ENCODE measurements at regions of chr13 and their contacts with region 1.

Region 1: GRCh38 chr13:112638157-112638750 is 50.3 kb upstream of the TUBGCP3 start:
- DNase-seq: no peak
- H3K4me3 ChIP-seq: no peak overlapping the region
- H3K27ac ChIP-seq: no peak overlapping the region
- H3K4me1 ChIP-seq: no peaks in the 10 kb centered on the region
- H3K27me3 ChIP-seq: no peaks in the 10 kb centered on the region
- CTCF ChIP-seq: no peak
- EP300 ChIP-seq: no peak
- POLR2A ChIP-seq: no peak

Region 2: DNA sequence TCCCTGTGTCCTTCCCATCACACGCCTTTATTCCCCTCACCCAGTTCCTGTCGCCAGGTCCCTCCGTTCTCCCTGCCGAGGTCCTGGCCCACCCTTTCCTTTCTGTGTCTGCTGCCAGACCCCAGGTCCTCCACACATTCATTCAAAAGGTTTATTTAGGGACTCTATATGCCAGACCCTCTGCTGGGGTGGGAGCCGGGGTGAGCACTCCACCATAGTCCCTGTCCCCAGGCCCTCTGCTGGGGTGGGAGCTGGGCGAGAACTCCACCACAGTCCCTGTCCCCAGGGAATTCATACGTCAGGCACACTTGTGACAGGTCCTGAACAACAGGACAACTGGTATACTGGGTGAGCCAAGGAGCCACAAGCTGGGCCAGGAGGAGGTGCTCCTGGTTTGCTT is 15.9 kb before region 1 on chr13:
- intact Hi-C with region 1: loop called in 1 of 4 experiments (anchors 1 kb)
- DNase-seq: no peak
- H3K4me3 ChIP-seq: no peak overlapping the region
- H3K27ac ChIP-seq: no peak overlapping the region
- H3K4me1 ChIP-seq: no peaks in the 10 kb centered on the region
- H3K27me3 ChIP-seq: no peaks in the 10 kb centered on the region
- CTCF ChIP-seq: no peak
- EP300 ChIP-seq: no peak
- POLR2A ChIP-seq: no peak

Region 3: DNA sequence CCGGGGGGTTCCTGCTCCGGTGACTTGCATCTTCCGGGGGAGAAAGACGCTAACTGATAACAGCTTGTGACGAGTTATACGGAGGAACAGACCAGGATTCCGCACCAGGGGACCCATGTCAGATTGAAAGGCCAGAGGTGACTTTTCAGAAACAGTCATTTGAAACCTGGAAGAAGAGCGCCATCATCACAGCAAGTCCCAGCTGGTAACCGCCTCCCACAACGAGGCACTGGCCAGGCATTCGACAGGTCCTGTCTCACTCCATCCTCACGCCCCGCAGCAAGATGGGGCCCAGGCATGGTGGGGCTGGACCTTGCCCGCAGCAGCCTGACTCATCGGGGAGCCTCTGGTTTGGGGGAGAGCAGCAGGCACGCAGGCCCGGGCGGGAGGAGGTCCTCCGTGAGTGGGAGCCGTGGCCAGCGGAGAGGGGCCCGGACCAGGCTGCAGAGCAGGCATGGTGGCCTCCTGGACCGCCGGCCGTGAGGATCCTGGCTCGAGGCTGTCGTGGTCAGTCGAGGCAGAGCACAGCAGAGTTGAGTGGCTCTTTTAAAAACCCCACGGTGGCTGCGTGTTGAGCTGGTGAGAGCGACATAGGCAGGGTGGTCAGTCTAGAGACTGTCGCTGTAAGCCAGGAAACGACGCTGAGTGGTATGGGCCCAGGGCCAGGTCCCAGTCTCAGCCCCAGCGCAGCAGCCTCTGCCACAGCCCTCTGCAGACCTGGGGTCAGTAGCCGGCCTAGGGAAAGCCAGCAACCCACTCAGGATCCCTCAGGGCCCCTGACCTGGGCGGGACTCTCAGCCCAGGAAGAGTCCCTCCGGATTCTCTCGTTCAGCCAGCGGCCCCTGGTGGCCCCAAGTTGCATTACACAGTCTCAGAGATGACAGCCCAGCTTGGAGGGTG is 235.8 kb after region 1 on chr13:
- intact Hi-C with region 1: loop called in 3 of 4 experiments (anchors 2 to 10 kb)
- DNase-seq: peak; percentile 69 to 88 (median 82)
- H3K4me3 ChIP-seq: no peak overlapping the region
- H3K27ac ChIP-seq: peak overlapping the region in 1 of 2 donors; percentile 24
- H3K4me1 ChIP-seq: no peaks in the 10 kb centered on the region
- H3K27me3 ChIP-seq: no peaks in the 10 kb centered on the region
- CTCF ChIP-seq: peak; percentile 70 to 90 (median 89)
- EP300 ChIP-seq: no peak
- POLR2A ChIP-seq: no peak

Measured in ovary (tissue), 10 donors.